ENCODE measurements at regions of chr3 and their contacts with region 1.

Region 1: DNA sequence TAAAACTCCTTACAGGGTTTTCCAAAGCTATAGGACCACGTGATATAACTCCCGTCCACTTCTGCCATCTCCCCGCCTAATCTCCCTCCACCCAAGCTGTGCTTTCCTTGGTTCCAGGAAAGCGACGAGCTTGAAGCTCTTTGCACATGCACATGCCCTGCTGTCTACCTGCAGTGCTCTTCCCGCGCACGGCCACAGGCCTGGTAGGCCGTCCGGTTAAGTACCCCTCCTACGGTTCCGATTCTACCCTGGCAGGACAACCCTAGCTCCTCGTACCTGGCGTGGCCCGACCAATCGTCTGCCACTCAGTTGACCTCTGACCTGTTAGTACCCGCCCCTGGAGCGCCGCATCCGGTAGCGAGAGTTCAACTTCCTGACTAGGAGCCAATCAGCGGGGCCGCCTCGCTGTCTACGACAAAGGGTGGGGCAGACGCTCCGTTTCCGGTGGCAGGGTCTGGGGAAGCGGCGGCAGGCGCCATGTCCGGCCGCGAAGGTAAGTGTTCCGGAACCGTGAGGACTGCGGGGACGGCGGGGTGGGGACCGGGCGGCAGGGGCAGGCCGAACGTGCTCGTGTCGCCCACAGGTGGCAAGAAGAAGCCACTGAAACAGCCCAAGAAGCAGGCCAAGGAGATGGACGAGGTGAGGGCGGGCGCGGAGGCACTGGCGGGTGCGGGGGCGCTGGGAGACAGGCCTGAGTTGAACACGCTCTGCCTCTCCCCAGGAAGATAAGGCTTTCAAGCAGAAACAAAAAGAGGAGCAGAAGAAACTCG is at the starts of genes CCDC51 and TMA7:
- DNase-seq: peak; percentile 88
- ATAC-seq: peak; percentile 98
- H3K4me3 ChIP-seq: peak within 1 kb of the TSS; percentile 91 to 94
- H3K27ac ChIP-seq: peak within 1 kb of the TSS; percentile 90
- H3K4me1 ChIP-seq: peaks cover 5% of the 10 kb centered on the region; the same call in 1 of the 2 replicates
- H3K27me3 ChIP-seq: no peaks in the 10 kb centered on the region
- CTCF ChIP-seq: no peak
- total RNA-seq, gene CCDC51: 11.9 TPM
- total RNA-seq, gene TMA7: 175 TPM

Region 2: GRCh38 chr3:48194446-48195071 is 245.4 kb before region 1 on chr3:
- CTCF ChIA-PET with region 1: interaction called, 20 read pairs
- POLR2A ChIA-PET with region 1: no interaction called
- in situ Hi-C with region 1: no loop called
- intact Hi-C with region 1: no loop called
- DNase-seq: peak; percentile 46
- ATAC-seq: peak; percentile 89
- H3K4me3 ChIP-seq: no peak overlapping the region
- H3K27ac ChIP-seq: no peak overlapping the region
- H3K4me1 ChIP-seq: no peaks in the 10 kb centered on the region
- H3K27me3 ChIP-seq: no peaks in the 10 kb centered on the region
- CTCF ChIP-seq: peak; percentile 87

Region 3: DNA sequence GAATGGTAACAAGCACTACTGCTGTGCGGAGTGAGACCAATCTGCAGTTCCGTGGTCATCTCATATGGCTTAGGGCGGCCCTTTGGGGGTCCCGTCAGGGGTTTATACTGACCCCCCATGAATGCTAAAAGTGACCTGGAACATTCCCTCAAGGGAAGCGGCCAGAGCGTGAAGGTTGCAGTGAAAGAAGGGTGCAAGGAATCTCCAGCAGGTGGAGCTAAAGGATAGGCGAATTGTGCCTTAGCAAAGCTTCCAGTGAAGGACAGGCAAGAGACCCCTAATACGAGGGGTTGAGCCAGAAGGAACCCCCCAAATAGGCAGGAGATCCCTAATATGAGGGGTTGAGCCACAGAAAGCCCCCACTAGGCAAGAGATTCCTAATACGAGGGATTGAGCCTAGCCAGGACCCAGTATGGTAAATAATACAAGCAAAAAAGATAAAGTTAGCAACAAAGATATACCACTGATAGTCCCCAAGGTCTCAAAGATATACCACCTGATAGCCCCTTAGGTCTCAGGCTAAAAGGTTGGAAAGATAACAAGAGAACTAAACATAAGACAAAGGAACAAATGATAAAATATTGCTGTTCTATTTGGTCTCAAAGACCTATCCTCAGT is 166.3 kb before region 1 on chr3:
- CTCF ChIA-PET with region 1: interaction called, 29 read pairs
- POLR2A ChIA-PET with region 1: no interaction called
- in situ Hi-C with region 1: no loop called
- intact Hi-C with region 1: loop called (anchors 5 kb)
- DNase-seq: peak; percentile 32
- ATAC-seq: peak; percentile 86
- H3K4me3 ChIP-seq: no peak overlapping the region
- H3K27ac ChIP-seq: no peak overlapping the region
- H3K4me1 ChIP-seq: no peaks in the 10 kb centered on the region
- H3K27me3 ChIP-seq: no peaks in the 10 kb centered on the region
- CTCF ChIP-seq: peak; percentile 81

Region 4: GRCh38 chr3:48400824-48401433 is 39.1 kb before region 1 on chr3:
- CTCF ChIA-PET with region 1: interaction called, 98 read pairs
- POLR2A ChIA-PET with region 1: interaction called, 5 read pairs
- in situ Hi-C with region 1: no loop called
- intact Hi-C with region 1: loop called (anchors 5 kb)
- DNase-seq: peak; percentile 32
- ATAC-seq: peak; percentile 80
- H3K4me3 ChIP-seq: no peak overlapping the region
- H3K27ac ChIP-seq: no peak overlapping the region
- H3K4me1 ChIP-seq: no peaks in the 10 kb centered on the region
- H3K27me3 ChIP-seq: no peaks in the 10 kb centered on the region
- CTCF ChIP-seq: peak; percentile 81

Region 5: GRCh38 chr3:48408823-48409281 is 31.2 kb before region 1 on chr3:
- CTCF ChIA-PET with region 1: interaction called, 98 read pairs
- POLR2A ChIA-PET with region 1: no interaction called
- in situ Hi-C with region 1: no loop called
- intact Hi-C with region 1: loop called (anchors 5 kb)
- DNase-seq: no peak
- ATAC-seq: no peak
- H3K4me3 ChIP-seq: no peak overlapping the region
- H3K27ac ChIP-seq: no peak overlapping the region
- H3K4me1 ChIP-seq: no peaks in the 10 kb centered on the region
- H3K27me3 ChIP-seq: no peaks in the 10 kb centered on the region
- CTCF ChIP-seq: no peak

Region 6: GRCh38 chr3:48664929-48665328 is 224.9 kb after region 1 on chr3:
- CTCF ChIA-PET with region 1: no interaction called
- POLR2A ChIA-PET with region 1: interaction called, 11 read pairs
- in situ Hi-C with region 1: no loop called
- intact Hi-C with region 1: no loop called
- DNase-seq: no peak
- ATAC-seq: no peak
- H3K4me3 ChIP-seq: no peak overlapping the region
- H3K27ac ChIP-seq: no peak overlapping the region
- H3K4me1 ChIP-seq: no peaks in the 10 kb centered on the region
- H3K27me3 ChIP-seq: no peaks in the 10 kb centered on the region
- CTCF ChIP-seq: no peak

Region 7: GRCh38 chr3:49339945-49340800 is 900.2 kb after region 1 on chr3 and contains the start of gene USP4:
- CTCF ChIA-PET with region 1: no interaction called
- POLR2A ChIA-PET with region 1: interaction called, 12 read pairs
- in situ Hi-C with region 1: no loop called
- intact Hi-C with region 1: no loop called
- DNase-seq: peak; percentile 47
- ATAC-seq: peak; percentile 97
- H3K4me3 ChIP-seq: peak within 1 kb of the TSS; percentile 72 to 83
- H3K27ac ChIP-seq: peak within 1 kb of the TSS; percentile 91
- H3K4me1 ChIP-seq: peaks cover 3% of the 10 kb centered on the region; the same call in 1 of the 2 replicates
- H3K27me3 ChIP-seq: no peaks in the 10 kb centered on the region
- CTCF ChIP-seq: peak; percentile 49; the same call in 1 of the 2 replicates
- total RNA-seq, gene USP4: 39.9 TPM

Region 8: GRCh38 chr3:49769286-49769915 is 1329.4 kb after region 1 on chr3:
- CTCF ChIA-PET with region 1: no interaction called
- POLR2A ChIA-PET with region 1: no interaction called
- in situ Hi-C with region 1: no loop called
- intact Hi-C with region 1: no loop called
- DNase-seq: no peak
- ATAC-seq: peak; percentile 48; the same call in 1 of the 2 replicates
- H3K4me3 ChIP-seq: no peak overlapping the region
- H3K27ac ChIP-seq: no peak overlapping the region
- H3K4me1 ChIP-seq: no peaks in the 10 kb centered on the region; the same call in 1 of the 2 replicates
- H3K27me3 ChIP-seq: no peaks in the 10 kb centered on the region
- CTCF ChIP-seq: no peak